GM10248 (cell line): ENCODE measurements at regions of chr19 and their contacts with region 1.

Region 1: DNA sequence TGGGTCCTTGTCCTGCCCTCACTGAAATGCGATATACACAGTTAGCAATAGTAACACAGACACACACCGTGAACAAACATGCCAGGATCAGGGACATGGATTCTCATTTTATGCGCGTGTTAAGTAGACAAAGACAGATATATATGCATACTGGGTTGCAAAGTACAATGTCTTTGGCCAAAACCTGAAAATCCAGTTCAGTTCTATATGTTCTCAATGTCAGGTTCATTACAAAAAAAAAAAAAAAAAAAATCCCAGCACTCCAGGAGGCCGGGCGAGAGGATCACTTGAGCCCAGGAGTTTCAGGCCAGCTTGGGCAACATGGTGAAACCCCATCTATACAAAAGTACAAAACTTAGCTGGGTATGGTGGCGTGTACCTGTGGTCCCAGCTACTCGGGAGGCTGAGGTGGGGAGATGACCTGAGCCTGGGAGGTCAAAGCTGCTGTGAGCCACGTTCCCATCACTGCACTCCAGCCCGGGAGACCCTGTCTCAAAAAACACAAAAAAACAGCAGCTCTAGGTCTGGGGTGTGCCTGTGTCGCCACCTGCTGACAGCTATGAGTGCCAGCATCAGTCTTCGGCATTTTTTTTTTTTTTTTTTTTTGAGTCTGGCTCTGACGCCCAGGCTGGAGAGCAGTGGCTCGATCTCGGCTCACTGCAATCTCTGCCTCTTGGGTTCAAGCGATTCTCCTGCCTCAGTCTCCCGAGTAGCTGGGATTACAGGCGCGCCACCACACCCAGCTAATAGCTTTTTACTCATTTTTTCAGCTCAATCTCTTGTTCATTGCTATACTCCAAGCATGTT is 10.3 kb downstream of the AP2S1 start:
- DNase-seq: peak; percentile 72
- CTCF ChIP-seq: peak; percentile 76

Region 2: DNA sequence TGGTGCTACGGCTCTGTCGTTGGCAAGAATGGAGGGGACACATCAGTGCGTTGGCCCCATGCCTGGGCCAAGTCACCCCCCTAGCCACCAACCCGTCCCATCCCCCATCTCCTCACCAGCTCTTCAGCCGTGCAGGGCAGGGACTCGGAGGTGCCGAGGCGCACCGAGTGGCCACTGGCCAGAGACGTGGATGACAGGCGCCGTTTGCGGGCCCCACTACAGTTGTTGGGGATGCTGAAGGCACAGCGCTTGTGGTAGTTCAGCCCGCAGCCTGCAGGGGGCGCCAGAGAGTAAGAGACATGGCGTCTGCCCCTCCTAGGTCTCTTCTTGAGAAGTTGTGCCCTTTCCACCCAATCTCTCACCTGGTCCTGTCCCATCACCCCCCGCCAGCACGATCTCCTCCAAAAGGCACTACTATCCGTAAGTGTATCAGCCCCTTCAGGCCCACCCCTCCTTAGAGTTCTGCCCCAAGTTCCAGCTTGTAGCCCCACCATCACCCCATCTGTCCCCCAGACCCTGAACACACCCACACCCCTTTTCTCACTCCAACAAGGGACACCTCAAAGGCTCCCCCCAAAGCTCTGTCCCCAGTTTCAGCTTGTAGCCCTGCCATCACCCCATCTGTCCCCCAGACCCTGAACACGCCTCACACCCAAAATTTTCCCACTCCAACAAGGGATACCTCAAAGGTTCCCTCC is 135.8 kb before region 1 on chr19:
- CTCF ChIA-PET with region 1: interaction called, 13 read pairs
- POLR2A ChIA-PET with region 1: no interaction called
- DNase-seq: peak; percentile 92
- CTCF ChIP-seq: peak; percentile 90

Region 3: GRCh38 chr19:46748325-46749109 is 91.8 kb before region 1 on chr19:
- CTCF ChIA-PET with region 1: interaction called, 125 read pairs
- POLR2A ChIA-PET with region 1: no interaction called
- DNase-seq: peak; percentile 64
- CTCF ChIP-seq: peak; percentile 64

Region 4: DNA sequence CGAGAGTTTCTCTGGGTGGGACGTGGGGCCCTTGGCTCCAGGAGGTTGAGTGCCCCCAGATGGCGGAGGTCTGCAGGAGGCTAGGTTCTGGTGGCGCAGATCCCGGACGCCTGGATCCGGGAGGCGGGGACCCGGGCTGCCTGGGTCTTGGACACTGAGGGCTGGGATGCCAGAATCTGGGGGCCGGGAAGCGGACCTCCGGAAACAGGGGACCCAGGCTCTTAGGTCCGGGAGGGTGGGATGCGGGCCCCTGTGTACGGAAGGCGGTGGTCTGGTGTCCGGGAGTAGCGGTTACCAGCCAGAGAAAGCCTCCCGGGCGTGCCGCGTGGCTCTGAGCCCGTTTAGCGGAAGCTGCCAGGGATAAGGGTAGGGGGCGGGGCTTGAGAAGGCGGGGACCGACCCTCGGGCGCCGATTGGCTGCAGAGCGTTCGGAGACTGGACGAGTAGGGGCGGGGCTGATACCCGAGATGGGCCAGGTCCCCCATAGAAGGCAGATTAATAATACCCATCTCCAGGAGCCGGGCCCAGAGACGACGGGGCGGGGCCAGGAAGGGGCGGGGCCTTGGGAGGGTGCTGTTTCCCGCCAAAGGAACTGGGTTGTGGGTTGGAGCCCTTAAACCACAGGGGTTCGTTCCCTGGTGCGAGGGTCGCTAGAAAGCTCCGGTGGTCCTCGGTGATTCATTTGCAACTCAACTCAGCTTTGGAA is 51.9 kb before region 1 on chr19 and contains the start of gene SLC1A5:
- CTCF ChIA-PET with region 1: interaction called, 11 read pairs
- POLR2A ChIA-PET with region 1: interaction called, 6 read pairs
- DNase-seq: peak; percentile 99
- CTCF ChIP-seq: no peak

Region 5: GRCh38 chr19:46821498-46822409 is 18.6 kb before region 1 on chr19:
- CTCF ChIA-PET with region 1: interaction called, 63 read pairs
- POLR2A ChIA-PET with region 1: interaction called, 5 read pairs
- DNase-seq: peak; percentile 52
- CTCF ChIP-seq: no peak

Region 6: GRCh38 chr19:46856050-46857022 is 16.0 kb after region 1 on chr19:
- CTCF ChIA-PET with region 1: interaction called, 25 read pairs
- POLR2A ChIA-PET with region 1: interaction called, 10 read pairs
- DNase-seq: peak; percentile 90
- CTCF ChIP-seq: peak; percentile 87

Region 7: GRCh38 chr19:47022541-47023447 is 182.5 kb after region 1 on chr19:
- CTCF ChIA-PET with region 1: no interaction called
- POLR2A ChIA-PET with region 1: no interaction called
- DNase-seq: no peak
- CTCF ChIP-seq: no peak